Aorta (tissue), 5 donors: ENCODE measurements at regions of chr3 and their contacts with region 1.

Region 1: DNA sequence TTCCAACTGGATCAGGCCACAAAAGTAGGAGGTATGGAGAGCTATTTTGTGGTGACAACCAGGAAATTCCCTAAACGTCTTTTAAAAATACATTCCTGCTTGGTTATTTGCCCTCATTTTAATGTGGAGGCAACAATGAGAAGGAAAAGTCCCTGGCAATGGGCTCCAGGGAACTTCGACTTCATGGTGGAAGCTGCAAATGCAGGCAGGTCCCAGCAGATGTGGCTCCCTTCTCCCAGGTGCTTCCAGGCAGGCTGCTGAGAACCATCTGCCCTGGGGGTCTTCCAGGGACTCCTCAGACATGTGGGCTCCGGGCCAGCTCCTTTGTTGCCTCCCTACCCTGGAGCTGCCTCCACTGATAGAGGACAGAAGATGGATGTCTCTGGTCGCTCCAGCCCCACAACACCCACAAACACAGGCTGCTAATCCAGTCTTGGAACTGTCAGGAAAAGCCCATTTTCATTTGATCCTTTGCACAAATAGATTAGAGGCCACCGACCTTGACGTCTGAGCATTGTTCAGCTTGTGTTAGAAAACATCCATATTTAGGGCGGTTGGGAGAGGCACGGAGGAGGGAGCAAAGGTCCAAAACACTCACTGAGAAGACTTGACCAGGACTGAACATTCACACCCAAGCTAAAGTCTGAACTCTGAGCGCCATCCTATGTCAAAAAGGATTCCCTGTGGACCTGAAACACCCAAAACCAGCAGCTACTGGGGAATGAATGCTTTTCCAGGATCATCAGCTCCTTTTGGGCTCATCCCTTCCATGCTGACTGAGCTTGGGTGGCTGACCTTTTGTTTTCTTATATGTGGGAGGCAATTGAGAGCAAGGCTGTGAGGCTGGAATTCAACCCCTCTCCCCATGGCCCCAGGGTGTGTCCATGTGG is 30.2 kb upstream of the SLCO2A1 start:
- DNase-seq: no peak
- ATAC-seq: no peak
- H3K4me3 ChIP-seq: no peak overlapping the region
- H3K27ac ChIP-seq: no peak overlapping the region
- H3K4me1 ChIP-seq: no peaks in the 10 kb centered on the region
- H3K27me3 ChIP-seq: no peaks in the 10 kb centered on the region

Region 2: GRCh38 chr3:133812872-133813271 is 247.0 kb before region 1 on chr3:
- intact Hi-C with region 1: loop called in 1 of 2 experiments (anchors 10 kb)
- DNase-seq: no peak
- ATAC-seq: no peak
- H3K4me3 ChIP-seq: no peak overlapping the region
- H3K27ac ChIP-seq: no peak overlapping the region
- H3K4me1 ChIP-seq: no peaks in the 10 kb centered on the region
- H3K27me3 ChIP-seq: no peaks in the 10 kb centered on the region